Heart right ventricle (tissue), 16 donors: ENCODE measurements at regions of chr17 and their contacts with region 1.

Region 1: GRCh38 chr17:57009737-57010445 is 32.0 kb downstream of the SCPEP1 start:
- DNase-seq: peak; percentile 18 to 23
- ATAC-seq: peak; percentile 38 to 74 (median 60)
- H3K4me3 ChIP-seq: no peak overlapping the region
- H3K27ac ChIP-seq: no peak overlapping the region
- H3K4me1 ChIP-seq: peaks cover 0 to 6% (median 0%) of the 10 kb centered on the region in 9 donors
- H3K27me3 ChIP-seq: no peaks in the 10 kb centered on the region
- CTCF ChIP-seq: peak in 8 of 9 donors; percentile 41 to 77 (median 65)

Region 2: GRCh38 chr17:57068222-57068658 is 58.3 kb after region 1 on chr17:
- intact Hi-C with region 1: loop called in 1 of 10 experiments (anchors 5 kb)
- DNase-seq: no peak
- ATAC-seq: peak in 1 of 8 donors; percentile 44
- H3K4me3 ChIP-seq: no peak overlapping the region
- H3K27ac ChIP-seq: no peak overlapping the region
- H3K4me1 ChIP-seq: peaks cover 0 to 9% (median 0%) of the 10 kb centered on the region in 9 donors
- H3K27me3 ChIP-seq: no peaks in the 10 kb centered on the region
- CTCF ChIP-seq: no peak

Region 3: GRCh38 chr17:57106107-57106835 is 96.4 kb after region 1 on chr17:
- intact Hi-C with region 1: loop called in 7 of 10 experiments (anchors 2 to 10 kb)
- DNase-seq: peak in 1 of 2 donors; percentile 34
- ATAC-seq: peak in 6 of 8 donors; percentile 6 to 44 (median 20)
- H3K4me3 ChIP-seq: no peak overlapping the region
- H3K27ac ChIP-seq: peak overlapping the region in 9 of 10 donors; percentile 14 to 92 (median 80)
- H3K4me1 ChIP-seq: peaks cover 24 to 92% (median 62%) of the 10 kb centered on the region in 9 donors
- H3K27me3 ChIP-seq: no peaks in the 10 kb centered on the region
- CTCF ChIP-seq: peak in 8 of 9 donors; percentile 10 to 57 (median 46)

Region 4: DNA sequence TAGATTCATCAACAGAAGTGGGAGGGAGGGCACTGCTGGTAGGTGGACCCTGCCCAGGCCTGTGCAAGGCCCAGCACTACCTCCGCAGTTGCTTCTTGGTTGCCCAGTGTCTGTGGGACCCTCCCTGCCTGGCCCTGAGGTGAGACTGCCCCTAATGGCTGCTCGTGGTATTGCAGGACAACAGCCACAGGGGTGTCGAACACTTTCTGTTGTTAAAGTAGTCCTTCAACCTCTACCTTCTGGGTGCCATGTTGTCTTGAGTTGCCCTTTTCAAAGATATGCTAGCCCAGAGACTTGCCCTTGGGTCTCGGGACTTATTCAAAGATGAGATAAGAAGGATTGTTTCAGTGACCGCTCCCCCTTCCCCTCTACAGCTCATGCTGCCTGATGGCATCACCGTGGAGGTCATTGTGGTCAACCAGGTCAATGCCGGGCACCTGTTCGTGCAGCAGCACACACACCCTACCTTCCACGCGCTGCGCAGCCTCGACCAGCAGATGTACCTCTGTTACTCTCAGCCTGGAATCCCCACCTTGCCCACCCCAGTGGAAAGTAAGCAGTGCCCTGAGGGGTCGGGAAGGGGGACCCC is 104.3 kb after region 1 on chr17:
- intact Hi-C with region 1: loop called in 7 of 10 experiments (anchors 2 to 10 kb)
- DNase-seq: peak; percentile 31 to 52
- ATAC-seq: peak in 4 of 8 donors; percentile 16 to 32 (median 22)
- H3K4me3 ChIP-seq: no peak overlapping the region
- H3K27ac ChIP-seq: peak overlapping the region in 7 of 10 donors; percentile 24 to 86 (median 56)
- H3K4me1 ChIP-seq: peaks cover 23 to 70% (median 58%) of the 10 kb centered on the region in 9 donors
- H3K27me3 ChIP-seq: no peaks in the 10 kb centered on the region
- CTCF ChIP-seq: peak; percentile 82 to 91 (median 87)